Calu3 (cell line): ENCODE measurements at regions of chr11 and their contacts with region 1.

Region 1: GRCh38 chr11:57001674-57002401 is 13.1 kb downstream of the OR5AK2 start:
- DNase-seq: no peak
- H3K4me3 Mint-ChIP-seq: no peak overlapping the region
- H3K27ac Mint-ChIP-seq: no peak overlapping the region
- H3K4me1 Mint-ChIP-seq: peaks cover 16% of the 10 kb centered on the region
- H3K27me3 Mint-ChIP-seq: no peaks in the 10 kb centered on the region
- CTCF ChIP-seq: no peak

Region 2: DNA sequence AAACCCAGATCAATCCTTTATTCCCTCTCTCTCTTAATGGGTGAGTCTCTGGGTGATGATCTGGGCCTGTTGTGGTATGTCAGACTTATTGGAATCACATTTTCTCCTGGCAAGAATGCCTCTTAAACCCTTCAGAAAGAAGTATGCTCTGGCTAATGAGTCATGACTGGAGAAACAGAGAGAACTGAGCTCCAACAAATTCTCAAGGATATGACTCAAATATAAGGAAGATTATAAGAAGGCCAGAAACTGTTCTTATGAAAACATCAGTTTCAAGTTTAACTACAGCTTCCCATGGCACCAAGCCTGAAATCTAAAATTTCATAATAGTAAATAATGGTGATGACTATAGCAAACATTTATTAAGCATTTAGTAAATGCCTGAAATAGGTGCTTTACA is 70.8 kb after region 1 on chr11:
- CTCF ChIA-PET with region 1: no interaction called
- intact Hi-C with region 1: loop called (anchors 5 kb)
- DNase-seq: peak; percentile 17
- H3K4me3 Mint-ChIP-seq: no peak overlapping the region
- H3K27ac Mint-ChIP-seq: peak overlapping the region; percentile 92
- H3K4me1 Mint-ChIP-seq: peaks cover 31% of the 10 kb centered on the region
- H3K27me3 Mint-ChIP-seq: no peaks in the 10 kb centered on the region
- CTCF ChIP-seq: no peak